Posterior cingulate gyrus (tissue), 11 donors: ENCODE measurements at regions of chr7 and their contacts with region 1.

Region 1: DNA sequence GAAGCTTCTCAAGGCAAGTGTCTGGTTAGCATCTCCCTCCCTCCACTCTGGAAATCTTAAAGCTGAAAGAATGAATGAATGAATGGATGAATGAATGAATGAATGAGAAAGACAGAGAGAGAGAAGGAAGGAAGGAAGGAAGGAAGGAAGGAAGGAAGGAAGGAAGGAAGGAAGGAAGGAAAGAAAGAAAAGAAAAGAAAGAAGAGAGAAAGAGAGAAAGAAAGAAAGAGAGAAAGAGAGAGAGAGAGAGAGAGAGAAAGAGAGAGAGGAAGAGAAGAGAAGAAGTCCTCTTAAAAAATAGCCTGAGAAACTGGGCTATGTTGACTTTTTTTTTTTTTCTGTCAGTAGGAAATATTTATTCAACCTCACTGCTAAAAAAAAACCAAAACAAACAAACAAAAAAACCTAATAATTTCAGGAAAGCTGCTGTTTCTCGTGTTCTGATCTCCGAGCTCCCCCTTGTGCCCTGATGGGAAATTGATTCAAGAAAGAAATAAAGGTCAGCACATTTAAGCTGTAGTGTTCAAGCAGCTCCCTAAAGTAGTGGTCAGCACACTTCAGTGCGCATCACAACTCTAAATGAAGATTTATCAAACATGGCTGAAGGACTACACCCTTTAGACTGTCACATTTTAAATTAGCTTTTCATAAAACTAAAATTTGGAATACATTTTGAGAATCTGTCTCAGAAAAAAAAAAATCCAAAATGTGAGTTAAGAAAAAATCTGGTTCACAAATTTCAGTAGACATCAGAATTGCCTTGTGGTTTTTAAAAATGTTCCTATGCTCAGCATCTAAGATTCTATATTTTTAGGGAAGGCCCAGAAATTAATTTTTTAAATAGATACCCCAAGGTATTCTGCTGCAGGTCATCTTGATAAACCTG is 154.3 kb downstream of the ELAPOR2 start:
- DNase-seq: peak in 3 of 10 donors; percentile 7 to 21 (median 8)

Region 2: GRCh38 chr7:85890244-85890811 is 1014.9 kb before region 1 on chr7:
- intact Hi-C with region 1: loop called (anchors 5 kb)
- DNase-seq: no peak

Region 3: DNA sequence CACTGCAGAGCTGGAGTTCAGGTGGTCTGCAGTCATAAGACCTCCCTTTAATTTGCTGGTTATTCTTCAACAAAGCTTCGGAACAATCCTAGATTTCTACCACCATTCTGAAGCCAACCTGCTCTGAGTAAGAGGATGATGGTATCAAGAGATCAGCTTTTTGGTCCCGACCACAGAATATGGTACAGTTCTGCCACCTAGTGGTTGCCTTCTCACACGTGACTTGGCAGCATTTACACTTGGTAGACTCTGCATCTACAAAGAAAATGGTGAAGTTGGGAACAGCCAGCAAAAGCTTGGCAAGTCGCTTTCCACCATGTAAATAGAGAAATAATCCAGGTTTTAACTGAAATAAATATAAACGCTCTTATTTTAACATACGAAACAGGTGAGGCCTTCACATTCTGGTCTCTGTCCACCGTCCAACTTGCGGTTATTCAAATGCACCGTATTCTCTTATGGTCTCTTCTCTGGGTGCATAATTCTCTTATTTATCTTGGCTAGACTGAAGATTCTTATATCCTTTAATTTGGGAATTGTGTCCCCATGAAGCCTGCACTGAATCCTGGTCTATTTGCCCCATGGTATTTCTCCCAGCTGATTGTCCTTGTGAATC is 435.4 kb before region 1 on chr7:
- intact Hi-C with region 1: loop called (anchors 10 kb)
- DNase-seq: peak in 9 of 10 donors; percentile 17 to 88 (median 62)

Region 4: GRCh38 chr7:86600506-86601290 is 304.5 kb before region 1 on chr7:
- intact Hi-C with region 1: loop called (anchors 2 kb)
- DNase-seq: peak; percentile 58 to 97 (median 72)

Region 5: GRCh38 chr7:86823769-86824168 is 81.4 kb before region 1 on chr7:
- intact Hi-C with region 1: loop called (anchors 10 kb)
- DNase-seq: no peak